Heart right ventricle (tissue), 16 donors: ENCODE measurements at regions of chr6 and their contacts with region 1.

Region 1: GRCh38 chr6:96626759-96627364 is 63.9 kb downstream of the FHL5 start:
- DNase-seq: no peak
- ATAC-seq: peak in 4 of 8 donors; percentile 29 to 74 (median 56)
- H3K4me3 ChIP-seq: no peak overlapping the region
- H3K27ac ChIP-seq: no peak overlapping the region
- H3K4me1 ChIP-seq: peaks cover 0 to 6% (median 0%) of the 10 kb centered on the region in 9 donors
- H3K27me3 ChIP-seq: peaks cover 0 to 12% (median 0%) of the 10 kb centered on the region in 7 donors
- CTCF ChIP-seq: peak in 8 of 9 donors; percentile 21 to 68 (median 51)

Region 2: DNA sequence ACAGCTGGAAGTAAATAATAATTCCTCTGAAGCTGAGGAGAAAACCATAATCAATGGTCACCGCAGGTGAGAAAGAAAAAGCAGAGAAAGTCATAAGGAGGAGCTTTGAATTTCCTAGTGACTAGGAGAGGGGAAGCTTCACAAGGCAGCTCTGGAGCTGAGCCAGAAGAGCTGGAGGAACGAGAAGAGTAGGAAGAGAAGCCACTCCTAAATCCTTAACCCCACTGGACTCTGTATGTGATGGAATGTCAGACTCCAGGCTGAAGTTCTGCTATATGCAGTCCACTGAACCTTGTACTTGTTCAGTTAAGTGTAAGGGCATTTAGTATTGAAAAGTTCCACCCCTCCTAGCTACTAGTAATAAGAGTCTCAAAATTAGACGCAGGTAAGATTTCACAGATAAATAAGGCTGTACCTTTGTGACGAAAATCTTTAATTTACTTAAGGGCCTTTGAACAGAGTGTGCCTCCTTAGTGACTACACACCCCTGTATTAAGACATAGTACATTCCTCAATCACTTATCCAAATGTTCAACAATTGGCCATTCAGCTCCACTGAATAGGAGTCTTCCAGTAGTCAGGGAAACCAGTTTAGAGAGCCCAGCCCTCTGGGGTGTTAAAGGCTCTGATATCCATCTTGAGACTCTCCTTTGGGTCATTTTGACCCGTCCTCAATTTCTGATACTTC is 176.6 kb before region 1 on chr6:
- intact Hi-C with region 1: no loop called
- DNase-seq: no peak
- ATAC-seq: peak in 2 of 8 donors; percentile 49 to 59
- H3K4me3 ChIP-seq: no peak overlapping the region
- H3K27ac ChIP-seq: no peak overlapping the region
- H3K4me1 ChIP-seq: peaks cover 0 to 7% (median 0%) of the 10 kb centered on the region in 9 donors
- H3K27me3 ChIP-seq: no peaks in the 10 kb centered on the region
- CTCF ChIP-seq: no peak

Region 3: DNA sequence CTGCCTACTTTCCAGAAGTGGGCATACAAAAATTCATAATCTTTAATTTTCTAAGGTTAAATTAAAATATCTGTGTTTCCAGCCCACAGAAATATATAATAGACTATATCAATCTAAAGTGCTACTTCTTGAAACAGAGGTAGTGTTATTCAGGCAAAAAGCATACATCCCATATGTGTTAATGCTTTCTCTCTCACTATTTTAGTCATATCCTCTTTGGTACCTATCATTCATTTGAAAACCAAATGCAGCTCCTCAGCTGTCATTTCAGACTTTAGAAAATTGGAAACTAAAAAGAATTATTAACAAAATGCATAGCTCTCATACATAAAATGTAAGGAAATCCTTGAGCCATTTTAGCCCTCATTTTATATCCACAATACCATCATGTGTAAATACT is 63.0 kb before region 1 on chr6:
- intact Hi-C with region 1: loop called in 2 of 10 experiments (anchors 10 kb)
- DNase-seq: no peak
- ATAC-seq: no peak
- H3K4me3 ChIP-seq: peak overlapping the region in 9 of 10 donors; percentile 4 to 38 (median 27)
- H3K27ac ChIP-seq: peak overlapping the region in 4 of 10 donors; percentile 16 to 51 (median 44)
- H3K4me1 ChIP-seq: no peaks in the 10 kb centered on the region
- H3K27me3 ChIP-seq: no peaks in the 10 kb centered on the region
- CTCF ChIP-seq: no peak

Region 4: DNA sequence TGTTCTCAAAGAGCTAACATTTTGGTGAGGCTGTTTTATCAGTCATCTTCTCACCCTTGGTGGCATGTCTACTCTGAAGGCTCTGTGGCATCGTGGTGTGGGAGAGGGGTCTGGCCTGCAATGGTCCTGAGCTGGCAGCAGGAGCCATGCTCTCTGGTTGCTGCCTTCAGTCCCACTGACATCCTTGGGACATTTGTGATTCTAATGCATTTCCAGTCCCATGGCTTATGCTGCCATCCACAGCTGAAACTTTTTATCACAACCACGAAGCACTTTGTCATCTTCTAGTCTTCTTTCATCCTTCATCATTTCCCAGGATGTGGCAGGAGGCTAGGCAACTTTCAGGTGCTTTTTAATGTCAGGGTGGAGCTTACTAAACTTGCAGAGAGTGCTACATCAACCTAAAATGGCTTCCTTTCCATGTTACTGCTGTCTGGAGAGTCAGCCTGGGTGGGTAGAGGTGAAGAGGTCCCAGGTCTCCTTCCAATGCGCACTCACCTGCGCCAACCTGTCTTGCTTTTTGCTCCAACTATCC is 133.4 kb after region 1 on chr6:
- intact Hi-C with region 1: loop called in 1 of 10 experiments (anchors 10 kb)
- DNase-seq: no peak
- ATAC-seq: no peak
- H3K4me3 ChIP-seq: no peak overlapping the region
- H3K27ac ChIP-seq: no peak overlapping the region
- H3K4me1 ChIP-seq: no peaks in the 10 kb centered on the region
- H3K27me3 ChIP-seq: peaks cover 0 to 5% (median 0%) of the 10 kb centered on the region in 7 donors
- CTCF ChIP-seq: peak in 4 of 9 donors; percentile 6 to 25 (median 20)

Region 5: DNA sequence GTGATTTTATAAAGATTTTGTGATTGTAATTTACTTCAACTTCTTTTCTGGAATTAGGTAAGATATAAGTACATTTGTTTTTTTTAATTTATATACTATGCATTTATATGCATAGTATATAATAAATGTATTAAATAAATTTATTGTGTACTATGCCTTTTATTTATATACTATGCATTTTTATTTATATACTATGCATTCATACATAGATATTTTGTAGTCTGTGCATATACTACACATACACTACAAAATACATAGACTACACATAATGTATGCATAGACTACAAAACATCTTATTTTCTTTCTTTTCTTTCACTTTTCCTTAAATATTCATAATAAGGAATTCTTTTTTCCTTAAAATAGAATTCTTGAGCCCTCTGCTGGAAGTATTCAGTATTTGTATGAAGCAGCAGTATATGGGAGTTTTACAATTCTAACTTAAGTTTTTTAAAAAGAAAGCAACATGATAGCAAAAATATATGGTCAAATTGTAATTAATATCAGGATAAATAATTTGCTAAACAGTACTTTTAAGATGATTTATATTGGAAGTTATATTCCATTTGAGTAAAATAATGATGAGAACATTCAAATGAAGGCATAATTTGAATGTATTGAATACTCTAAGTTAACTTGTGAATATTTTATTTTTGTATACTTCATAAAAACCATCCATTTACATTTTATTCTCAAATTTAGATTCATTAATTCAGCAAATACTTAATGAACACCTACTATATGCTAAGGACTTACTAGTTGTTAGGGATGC is 427.0 kb after region 1 on chr6:
- intact Hi-C with region 1: loop called in 8 of 10 experiments (anchors 2 to 5 kb)
- DNase-seq: no peak
- ATAC-seq: no peak
- H3K4me3 ChIP-seq: no peak overlapping the region
- H3K27ac ChIP-seq: no peak overlapping the region
- H3K4me1 ChIP-seq: peaks cover 0 to 4% (median 0%) of the 10 kb centered on the region in 9 donors
- H3K27me3 ChIP-seq: no peaks in the 10 kb centered on the region
- CTCF ChIP-seq: peak; percentile 14 to 70 (median 63)

Region 6: DNA sequence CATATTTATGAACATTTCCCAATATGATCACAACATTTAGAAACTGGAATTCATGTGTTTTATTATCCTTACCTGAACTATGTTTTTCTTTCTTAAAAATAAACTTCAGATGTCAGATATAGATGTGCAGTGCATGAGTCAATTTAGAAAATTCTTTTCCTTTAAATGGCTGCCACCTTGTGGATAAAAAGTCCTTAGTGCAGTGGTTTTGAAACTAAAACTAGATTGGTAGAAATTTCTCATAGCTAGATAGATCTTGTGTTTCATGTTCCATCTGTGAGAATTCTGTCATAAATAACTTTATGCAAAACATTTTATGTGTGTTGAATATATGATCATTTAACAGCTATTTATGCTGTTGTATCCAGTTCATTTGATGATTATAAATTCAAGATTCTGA is 432.6 kb after region 1 on chr6:
- intact Hi-C with region 1: loop called (anchors 2 to 5 kb)
- DNase-seq: no peak
- ATAC-seq: peak in 1 of 8 donors; percentile 33
- H3K4me3 ChIP-seq: no peak overlapping the region
- H3K27ac ChIP-seq: no peak overlapping the region
- H3K4me1 ChIP-seq: no peaks in the 10 kb centered on the region
- H3K27me3 ChIP-seq: peaks cover 0 to 3% (median 0%) of the 10 kb centered on the region in 7 donors
- CTCF ChIP-seq: peak; percentile 20 to 70 (median 61)

Region 7: GRCh38 chr6:97068211-97068610 is 441.3 kb after region 1 on chr6:
- intact Hi-C with region 1: loop called in 2 of 10 experiments (anchors 5 kb)
- DNase-seq: no peak
- ATAC-seq: no peak
- H3K4me3 ChIP-seq: no peak overlapping the region
- H3K27ac ChIP-seq: no peak overlapping the region
- H3K4me1 ChIP-seq: no peaks in the 10 kb centered on the region
- H3K27me3 ChIP-seq: peaks cover 0 to 4% (median 0%) of the 10 kb centered on the region in 7 donors
- CTCF ChIP-seq: peak in 7 of 9 donors; percentile 36 to 66 (median 52)

Region 8: GRCh38 chr6:97203343-97203742 is 576.5 kb after region 1 on chr6:
- intact Hi-C with region 1: no loop called
- DNase-seq: no peak
- ATAC-seq: no peak
- H3K4me3 ChIP-seq: no peak overlapping the region
- H3K27ac ChIP-seq: no peak overlapping the region
- H3K4me1 ChIP-seq: no peaks in the 10 kb centered on the region
- H3K27me3 ChIP-seq: no peaks in the 10 kb centered on the region
- CTCF ChIP-seq: no peak